Dorsolateral prefrontal cortex (tissue), 120 donors: ENCODE measurements at regions of chr13 and their contacts with region 1.

Region 1: DNA sequence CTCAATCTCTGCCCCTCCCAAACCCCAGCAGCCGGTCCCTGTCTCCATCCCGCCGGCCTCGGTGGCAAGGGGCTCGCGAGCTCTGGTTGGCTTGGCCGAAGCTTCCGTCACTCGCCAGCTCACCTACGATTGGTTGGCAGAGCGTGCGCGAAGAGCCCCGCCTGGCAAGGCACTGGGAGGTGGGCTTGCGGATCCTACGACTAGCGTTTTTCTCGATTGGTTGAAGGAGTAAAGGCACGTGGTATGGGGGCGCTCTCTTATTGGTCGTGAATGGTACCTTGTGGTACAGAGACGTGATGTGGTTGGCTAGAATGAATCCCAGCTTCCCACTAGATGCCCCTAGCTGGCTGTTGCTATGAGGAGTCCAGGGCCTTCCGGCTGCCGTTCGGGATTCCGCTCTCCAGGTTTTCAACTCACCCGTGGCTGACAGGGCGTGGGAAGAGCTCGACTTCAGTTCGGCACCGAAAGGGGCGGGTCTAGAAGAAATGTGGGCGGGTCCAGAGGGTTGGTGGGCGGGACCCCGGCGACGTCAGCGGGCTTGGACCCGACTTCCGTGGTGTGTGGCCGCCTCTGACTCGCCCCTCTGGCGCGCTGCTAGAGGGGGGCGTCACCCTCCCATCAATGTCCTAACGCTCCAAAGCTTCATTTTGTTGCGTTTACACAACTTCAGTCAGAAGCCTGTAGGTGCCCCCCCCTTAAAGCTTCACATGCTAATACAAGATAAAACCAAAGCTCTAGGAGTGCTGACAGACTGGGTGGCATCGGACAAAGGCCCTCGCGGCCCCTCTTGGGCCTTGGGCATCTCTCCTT is 847 bp upstream of the RAP2A start:
- DNase-seq: peak; percentile 98 to 99 (median 99)
- H3K4me3 ChIP-seq: peak overlapping the region; percentile 66 to 99 (median 90)
- H3K27ac ChIP-seq: peak overlapping the region; percentile 89 to 100 (median 100)
- H3K27me3 ChIP-seq: no peaks in the 10 kb centered on the region
- CTCF ChIP-seq: peak in 24 of 56 donors; percentile 1 to 46 (median 19)

Region 2: GRCh38 chr13:97109841-97110492 is 323.2 kb before region 1 on chr13:
- intact Hi-C with region 1: loop called (anchors 2 kb)
- DNase-seq: peak; percentile 85 to 95 (median 88)
- H3K4me3 ChIP-seq: peak overlapping the region in 58 of 59 donors; percentile 11 to 69 (median 50)
- H3K27ac ChIP-seq: peak overlapping the region in 58 of 59 donors; percentile 8 to 89 (median 75)
- H3K27me3 ChIP-seq: no peaks in the 10 kb centered on the region
- CTCF ChIP-seq: peak; percentile 95 to 100 (median 99)

Region 3: DNA sequence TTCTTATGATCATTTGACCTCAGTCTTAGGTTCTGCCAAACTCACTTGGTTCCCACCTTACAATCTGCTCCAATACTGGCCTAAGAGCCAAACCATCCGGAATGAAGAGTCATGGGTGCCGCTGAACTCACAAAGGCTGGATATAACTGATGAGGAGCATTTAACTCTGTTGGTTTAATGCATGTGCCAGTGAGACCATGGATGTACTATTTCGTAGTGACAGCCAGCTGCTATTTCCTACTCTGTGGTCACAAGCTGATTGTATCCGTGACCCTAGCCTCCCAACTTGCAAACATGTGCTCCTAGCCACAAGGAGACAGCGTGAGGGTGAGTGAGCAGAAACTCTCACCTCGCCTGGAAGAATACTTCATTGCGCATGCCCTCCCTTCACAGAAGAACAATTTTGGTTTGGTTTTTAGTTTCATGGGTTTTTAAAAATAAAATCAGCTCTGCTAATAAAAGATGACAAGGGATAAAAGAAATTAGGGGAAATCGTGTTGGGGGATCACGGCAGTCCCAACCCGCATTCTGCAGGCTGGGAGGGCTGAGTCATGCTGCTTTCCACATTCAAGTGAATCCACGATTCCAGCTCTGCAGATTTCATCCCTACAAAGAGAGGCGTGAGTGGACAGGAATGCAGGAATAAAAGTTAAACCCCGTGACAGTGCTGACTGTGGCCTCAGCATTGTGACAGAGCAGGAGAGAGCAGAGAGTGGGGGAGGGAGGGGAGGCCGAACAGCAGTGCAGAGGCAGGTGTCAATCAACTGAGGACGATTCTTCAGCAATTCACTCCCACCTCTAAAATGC is 65.9 kb before region 1 on chr13:
- intact Hi-C with region 1: loop called (anchors 2 to 5 kb)
- DNase-seq: peak in 4 of 10 donors; percentile 39 to 69 (median 49)
- H3K4me3 ChIP-seq: peak overlapping the region in 17 of 59 donors; percentile 1 to 38 (median 12)
- H3K27ac ChIP-seq: peak overlapping the region in 58 of 59 donors; percentile 9 to 89 (median 77)
- H3K27me3 ChIP-seq: no peaks in the 10 kb centered on the region
- CTCF ChIP-seq: no peak

Region 4: DNA sequence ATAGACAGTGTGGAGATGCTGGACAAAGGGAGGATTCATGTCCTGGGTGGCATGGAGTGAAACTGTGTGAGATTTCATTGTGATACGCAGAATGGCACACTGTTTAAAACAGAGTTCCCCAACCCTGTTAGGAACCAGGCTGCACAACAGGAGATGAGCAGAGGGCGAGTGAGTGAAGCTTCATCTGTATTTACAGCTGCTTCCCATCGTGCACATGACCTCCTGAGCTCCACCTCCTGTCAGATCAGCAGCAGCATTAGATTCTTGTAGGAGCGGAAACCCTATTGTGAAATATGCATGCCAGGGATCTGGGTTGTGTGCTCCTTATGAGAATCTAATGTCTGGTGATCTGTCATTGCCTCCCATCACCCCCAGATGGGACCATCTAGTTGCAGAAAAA is 73.4 kb after region 1 on chr13:
- intact Hi-C with region 1: loop called in 1 of 2 experiments (anchors 2 kb)
- DNase-seq: peak in 3 of 10 donors; percentile 12 to 45 (median 40)
- H3K4me3 ChIP-seq: peak overlapping the region in 4 of 59 donors; percentile 9 to 24 (median 12)
- H3K27ac ChIP-seq: no peak overlapping the region
- H3K27me3 ChIP-seq: no peaks in the 10 kb centered on the region
- CTCF ChIP-seq: peak in 7 of 56 donors; percentile 11 to 34 (median 21)

Region 5: DNA sequence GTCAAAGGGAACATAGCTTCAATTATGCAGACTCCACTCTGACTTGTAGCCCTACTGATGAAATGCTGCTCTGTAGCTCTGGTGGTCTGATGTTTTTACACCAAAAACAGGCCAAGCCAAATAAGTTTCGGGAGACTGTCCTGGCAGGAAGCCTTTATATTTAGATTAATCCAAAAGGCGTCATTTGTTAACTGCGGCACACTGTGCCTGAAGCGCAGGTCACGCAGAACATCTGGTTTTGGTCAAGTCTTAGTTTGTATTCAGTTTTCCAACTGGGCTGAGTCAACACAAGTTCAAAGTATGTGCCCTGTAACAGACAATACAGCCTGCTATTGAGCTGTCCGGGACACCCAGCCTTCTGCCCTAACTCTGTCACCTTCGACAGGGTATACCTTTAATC is 365.7 kb after region 1 on chr13:
- intact Hi-C with region 1: loop called in 1 of 2 experiments (anchors 5 kb)
- DNase-seq: no peak
- H3K4me3 ChIP-seq: no peak overlapping the region
- H3K27ac ChIP-seq: peak overlapping the region in 1 of 59 donors; percentile 9
- H3K27me3 ChIP-seq: no peaks in the 10 kb centered on the region
- CTCF ChIP-seq: no peak